ENCODE measurements at regions of chr11 and their contacts with region 1.

Region 1: DNA sequence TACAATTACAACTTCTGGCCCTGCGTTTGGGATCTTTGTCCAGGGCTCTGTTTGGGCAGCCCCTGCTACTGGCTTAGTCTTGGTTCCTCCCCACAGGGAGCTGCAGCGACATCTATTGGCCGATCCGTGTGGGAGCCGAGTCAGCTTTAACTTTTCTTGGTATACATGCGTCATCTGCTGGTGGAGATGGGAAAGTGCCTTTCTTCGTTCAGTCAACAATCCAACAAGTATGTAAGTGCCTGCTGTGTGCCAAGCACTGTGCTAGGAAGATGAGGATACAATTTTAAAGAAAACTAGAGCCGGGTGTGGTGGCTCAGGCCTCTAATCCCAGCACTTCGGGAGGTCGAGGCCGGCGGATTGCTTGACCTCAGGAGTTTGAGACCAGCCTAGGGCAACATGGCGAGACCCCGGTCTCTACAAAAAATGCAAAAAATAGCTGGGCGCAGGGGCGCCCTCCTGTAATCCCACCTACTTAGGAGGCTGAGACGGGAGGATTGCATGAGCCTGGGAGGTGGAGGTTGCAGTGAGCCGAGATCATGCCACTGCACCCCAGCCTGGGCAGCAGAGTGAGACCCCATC is 8.2 kb downstream of the TPBGL start:
- DNase-seq: peak; percentile 94
- ATAC-seq: peak; percentile 89
- H3K4me3 Mint-ChIP-seq: no peak overlapping the region
- H3K27ac Mint-ChIP-seq: no peak overlapping the region
- H3K4me1 Mint-ChIP-seq: no peaks in the 10 kb centered on the region
- H3K27me3 Mint-ChIP-seq: peaks cover 68% of the 10 kb centered on the region
- CTCF ChIP-seq: peak; percentile 86

Region 2: DNA sequence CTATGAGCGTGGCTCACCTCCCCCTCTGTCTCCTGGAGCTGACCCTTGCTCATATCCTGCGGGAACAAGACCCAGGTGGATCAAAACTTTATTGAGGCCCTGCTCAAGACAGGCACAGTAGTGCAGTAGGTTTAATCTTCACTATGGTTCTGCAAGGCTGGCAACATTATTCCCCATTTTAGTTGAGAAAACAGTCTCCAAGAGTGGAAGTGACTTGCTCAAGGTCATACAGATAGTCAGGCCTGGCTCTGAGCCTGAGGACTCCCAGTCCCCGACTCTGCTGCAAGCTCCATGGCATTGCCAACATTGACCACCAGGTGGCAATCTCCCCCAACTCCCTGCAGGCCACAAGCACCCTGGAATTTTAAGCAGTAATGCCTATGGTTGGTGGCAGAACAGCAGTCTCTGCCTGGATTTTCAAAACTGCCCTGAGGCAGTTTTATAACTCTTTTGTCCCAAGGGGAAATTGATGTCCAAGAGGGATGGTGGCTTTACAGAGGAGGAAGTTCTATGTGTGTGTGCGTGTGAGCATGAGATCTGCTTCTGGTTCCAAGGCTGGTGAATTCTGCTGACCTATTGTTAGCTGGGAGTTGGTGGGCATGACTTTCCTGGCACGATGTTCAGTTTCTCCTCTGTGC is 225.9 kb before region 1 on chr11:
- CTCF ChIA-PET with region 1: interaction called, 34 read pairs
- POLR2A ChIA-PET with region 1: no interaction called
- DNase-seq: peak; percentile 91
- ATAC-seq: peak; percentile 99
- H3K4me3 Mint-ChIP-seq: no peak overlapping the region
- H3K27ac Mint-ChIP-seq: no peak overlapping the region
- H3K4me1 Mint-ChIP-seq: no peaks in the 10 kb centered on the region
- H3K27me3 Mint-ChIP-seq: peaks cover 4% of the 10 kb centered on the region
- CTCF ChIP-seq: peak; percentile 97

Region 3: GRCh38 chr11:75214411-75214821 is 34.4 kb before region 1 on chr11:
- CTCF ChIA-PET with region 1: interaction called, 36 read pairs
- POLR2A ChIA-PET with region 1: no interaction called
- DNase-seq: peak; percentile 97
- ATAC-seq: peak; percentile 99
- H3K4me3 Mint-ChIP-seq: no peak overlapping the region
- H3K27ac Mint-ChIP-seq: no peak overlapping the region
- H3K4me1 Mint-ChIP-seq: no peaks in the 10 kb centered on the region
- H3K27me3 Mint-ChIP-seq: peaks cover 53% of the 10 kb centered on the region
- CTCF ChIP-seq: no peak

Region 4: GRCh38 chr11:75233742-75234172 is 15.0 kb before region 1 on chr11:
- CTCF ChIA-PET with region 1: interaction called, 43 read pairs
- POLR2A ChIA-PET with region 1: no interaction called
- DNase-seq: peak; percentile 71
- ATAC-seq: peak; percentile 88
- H3K4me3 Mint-ChIP-seq: no peak overlapping the region
- H3K27ac Mint-ChIP-seq: no peak overlapping the region
- H3K4me1 Mint-ChIP-seq: peaks cover 14% of the 10 kb centered on the region
- H3K27me3 Mint-ChIP-seq: peaks cover 16% of the 10 kb centered on the region
- CTCF ChIP-seq: no peak

Region 5: DNA sequence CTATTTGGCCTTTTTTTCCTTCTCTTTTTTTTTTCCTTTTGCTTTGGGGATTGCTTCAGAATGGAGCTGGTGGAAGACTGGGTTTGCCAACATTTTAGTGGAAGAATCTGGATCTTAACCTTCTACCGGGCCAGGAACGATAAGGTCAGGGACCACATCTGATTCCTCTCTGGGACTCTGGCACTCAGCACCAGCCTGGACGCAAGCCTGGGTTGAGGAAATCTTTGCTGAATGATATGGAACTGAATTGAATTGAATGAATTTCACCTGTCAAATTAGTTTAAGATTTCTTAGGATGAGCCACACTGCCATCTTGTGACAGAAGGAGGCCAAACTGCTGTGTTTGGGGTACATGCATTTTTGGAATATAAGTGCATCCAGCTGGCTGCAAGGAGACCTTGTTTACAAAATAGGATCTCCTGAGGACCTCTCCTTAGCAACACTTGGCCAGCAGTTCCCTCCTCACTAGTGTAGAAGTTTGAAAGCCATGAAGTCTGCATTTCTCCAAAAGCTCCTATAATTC is 22.2 kb after region 1 on chr11:
- CTCF ChIA-PET with region 1: interaction called, 25 read pairs
- POLR2A ChIA-PET with region 1: interaction called, 3 read pairs
- DNase-seq: no peak
- ATAC-seq: peak; percentile 19; the same call in 1 of the 2 replicates
- H3K4me3 Mint-ChIP-seq: no peak overlapping the region
- H3K27ac Mint-ChIP-seq: 0 out of 2 replicates have a peak overlapping the region, but pooled peaks have one; percentile 75
- H3K4me1 Mint-ChIP-seq: peaks cover 12% of the 10 kb centered on the region
- H3K27me3 Mint-ChIP-seq: no peaks in the 10 kb centered on the region
- CTCF ChIP-seq: no peak

Region 6: DNA sequence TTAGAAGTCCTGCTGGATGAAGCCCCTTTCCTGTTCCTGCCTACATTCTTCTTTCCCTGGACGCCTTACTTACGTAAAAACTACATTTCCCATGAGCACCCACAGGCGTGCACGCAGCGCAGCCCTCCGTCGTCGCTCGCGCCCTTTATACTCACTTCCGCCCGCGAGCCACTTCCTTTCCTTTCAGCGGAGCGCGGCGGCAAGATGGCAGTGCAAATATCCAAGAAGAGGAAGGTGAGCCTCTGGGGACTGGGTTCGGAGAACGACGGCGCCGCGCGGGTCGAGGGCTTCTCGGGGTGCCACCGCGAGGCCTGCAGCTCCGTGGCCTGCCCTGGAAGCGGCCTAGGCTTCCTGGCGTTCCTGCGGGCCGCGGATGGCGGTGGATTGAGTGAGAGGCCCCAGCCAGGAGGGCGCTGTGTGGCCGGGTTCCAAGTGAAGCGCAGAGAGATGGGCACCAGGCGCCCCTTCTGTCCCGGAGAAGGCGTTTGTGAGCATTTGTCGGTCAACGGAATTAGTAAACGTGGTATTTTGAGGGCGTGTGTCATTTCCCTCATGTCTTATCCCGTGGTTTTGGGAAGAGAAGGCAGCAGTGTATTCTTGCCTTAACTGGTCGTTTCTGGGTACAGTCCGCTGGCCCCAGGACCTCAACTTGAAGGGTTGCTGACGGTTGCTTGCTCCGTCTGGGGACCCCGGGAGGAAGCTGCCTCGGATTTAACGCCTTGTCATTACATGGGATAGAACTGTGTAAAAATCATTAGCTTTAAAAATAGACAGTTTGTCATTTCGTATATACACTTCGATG is 150.8 kb after region 1 on chr11 and contains the start of gene RPS3:
- CTCF ChIA-PET with region 1: no interaction called
- POLR2A ChIA-PET with region 1: no interaction called
- DNase-seq: peak; percentile 88
- ATAC-seq: peak; percentile 84
- H3K4me3 Mint-ChIP-seq: peak within 1 kb of the TSS; percentile 100
- H3K27ac Mint-ChIP-seq: peak within 1 kb of the TSS; percentile 99
- H3K4me1 Mint-ChIP-seq: peaks cover 39% of the 10 kb centered on the region
- H3K27me3 Mint-ChIP-seq: peaks cover 4% of the 10 kb centered on the region; the same call in 1 of the 2 replicates
- CTCF ChIP-seq: no peak
- total RNA-seq, gene RPS3: 3,967 to 4,516 TPM (median 4,446 TPM) in 3 replicates